H1 (cell line): ENCODE measurements at regions of chr19 and their contacts with region 1.

Region 1: GRCh38 chr19:1767464-1767933 is 14.2 kb downstream of the ONECUT3 start:
- DNase-seq: peak in 1 of 2 experiments; percentile 95
- H3K4me3 ChIP-seq: no peak overlapping the region
- H3K27ac ChIP-seq: no peak overlapping the region
- H3K4me1 ChIP-seq: peaks cover 0 to 20% (median 7%) of the 10 kb centered on the region in 4 experiments; a peak in 6 of 7 replicates
- H3K27me3 ChIP-seq: peaks cover 56 to 74% (median 68%) of the 10 kb centered on the region in 4 experiments
- CTCF ChIP-seq: peak; percentile 87 to 96 (median 89)
- EP300 ChIP-seq: no peak
- POLR2A ChIP-seq: no peak
- RAD21 ChIP-seq: peak; percentile 75

Region 2: DNA sequence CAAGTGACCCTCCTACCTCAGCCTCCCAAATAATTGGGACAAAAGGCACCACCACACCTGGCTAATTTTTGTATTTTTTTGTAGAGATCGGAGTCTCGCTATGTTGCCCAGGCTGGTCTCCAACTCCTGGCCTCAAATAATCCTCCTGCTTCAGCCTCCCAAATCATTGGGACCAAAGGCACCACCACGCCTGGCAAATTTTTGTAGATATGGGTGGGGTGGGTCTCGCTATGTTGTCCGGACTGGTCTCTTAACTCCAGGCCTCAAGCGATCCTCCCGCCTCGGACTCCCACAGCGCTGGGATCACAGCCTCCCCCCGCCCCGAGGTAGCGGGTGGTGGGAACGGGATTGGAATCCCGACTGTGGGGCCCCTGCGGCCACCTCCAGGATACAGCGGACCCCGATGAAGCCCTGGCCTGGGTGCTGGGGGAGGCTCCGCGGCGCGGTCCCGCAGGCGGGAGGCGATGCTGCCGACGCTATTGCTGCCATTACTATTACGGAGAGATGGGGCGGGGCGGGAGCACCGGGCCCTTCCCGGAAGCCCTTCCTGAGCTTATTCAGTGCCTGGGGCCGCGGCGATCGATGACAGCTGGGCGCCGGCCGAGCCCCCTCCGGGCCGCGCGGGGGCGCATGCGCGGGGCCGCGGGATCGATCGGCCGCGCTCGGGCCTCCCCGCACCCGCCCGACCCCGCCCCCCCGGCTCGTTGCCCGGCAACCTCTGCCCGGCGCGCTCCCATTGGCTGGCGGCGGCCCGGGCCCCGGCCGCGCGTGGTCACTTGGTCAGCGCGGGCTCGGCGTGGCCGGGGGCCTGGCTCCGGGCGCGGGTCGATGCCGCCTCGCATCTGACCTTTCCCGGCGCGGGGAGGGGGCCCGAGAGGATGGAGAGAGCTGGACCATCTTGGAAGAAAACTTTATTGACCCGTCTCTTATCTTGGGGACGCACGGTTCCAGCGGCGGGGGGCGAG is 42.1 kb before region 1 on chr19:
- CTCF ChIA-PET with region 1: interaction called, 10 read pairs
- POLR2A ChIA-PET with region 1: interaction called, 3 read pairs
- DNase-seq: peak in 1 of 2 experiments; percentile 86
- H3K4me3 ChIP-seq: peak overlapping the region; percentile 39 to 79 (median 53)
- H3K27ac ChIP-seq: no peak overlapping the region
- H3K4me1 ChIP-seq: peaks cover 2 to 6% (median 4%) of the 10 kb centered on the region in 4 experiments; a peak in 6 of 7 replicates
- H3K27me3 ChIP-seq: peaks cover 3 to 22% (median 18%) of the 10 kb centered on the region in 4 experiments; a peak in 5 of 7 replicates
- CTCF ChIP-seq: 0 out of 4 replicates have a peak, but pooled peaks of 1 of the 3 experiments have one; percentile 4
- EP300 ChIP-seq: no peak
- POLR2A ChIP-seq: no peak
- RAD21 ChIP-seq: 0 out of 4 replicates have a peak, but pooled peaks of 1 of the 2 experiments have one; percentile 0

Region 3: GRCh38 chr19:1754616-1755466 is 12.7 kb before region 1 on chr19:
- CTCF ChIA-PET with region 1: interaction called, 11 read pairs
- POLR2A ChIA-PET with region 1: no interaction called
- DNase-seq: peak in 1 of 2 experiments; percentile 73
- H3K4me3 ChIP-seq: peak overlapping the region in 2 of 4 experiments; percentile 19 to 43; a peak in 3 of 8 replicates
- H3K27ac ChIP-seq: no peak overlapping the region
- H3K4me1 ChIP-seq: peaks cover 0 to 38% (median 14%) of the 10 kb centered on the region in 4 experiments; a peak in 6 of 7 replicates
- H3K27me3 ChIP-seq: peaks cover 98 to 100% (median 99%) of the 10 kb centered on the region in 4 experiments
- CTCF ChIP-seq: no peak
- EP300 ChIP-seq: no peak
- POLR2A ChIP-seq: no peak
- RAD21 ChIP-seq: no peak

Region 4: DNA sequence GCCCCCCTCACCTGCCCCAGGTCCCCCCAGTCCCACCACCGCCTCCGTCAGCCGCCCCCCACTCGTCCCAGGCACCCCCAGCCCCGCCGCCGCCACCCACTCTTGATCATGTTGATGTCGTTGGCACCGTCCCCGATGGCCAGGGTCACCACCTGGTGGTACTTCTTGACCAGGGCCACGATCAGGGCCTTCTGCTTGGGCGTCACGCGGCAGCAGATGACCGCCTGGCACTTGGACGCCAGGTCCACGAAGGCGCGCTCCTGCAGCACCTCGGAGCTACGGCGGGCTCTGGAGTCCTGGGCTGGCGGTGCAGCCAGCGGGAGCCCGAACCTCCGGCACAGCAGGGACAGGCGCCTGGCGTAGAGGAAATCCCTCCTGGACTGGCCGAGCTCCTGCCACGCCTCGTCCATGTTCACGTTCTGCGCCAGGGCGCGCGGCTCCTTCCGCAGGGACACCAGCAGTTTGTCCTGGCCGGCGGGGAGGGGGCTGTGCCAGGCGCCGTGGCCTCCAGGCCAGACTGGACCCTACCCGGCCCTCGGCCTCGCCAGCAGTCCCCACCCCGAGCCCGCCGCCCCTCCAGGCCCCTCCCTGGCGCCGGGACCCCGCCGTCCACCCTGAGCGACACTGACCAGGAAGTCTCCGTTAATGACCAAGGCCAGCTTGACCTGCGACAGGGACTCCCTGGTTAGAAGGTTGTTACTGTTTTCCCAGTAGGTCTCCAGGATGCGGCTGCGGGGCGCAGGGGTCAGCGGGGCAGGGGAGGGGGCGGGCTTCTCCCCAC is 22.0 kb after region 1 on chr19:
- CTCF ChIA-PET with region 1: interaction called, 97 read pairs
- POLR2A ChIA-PET with region 1: interaction called, 4 read pairs
- DNase-seq: no peak
- H3K4me3 ChIP-seq: peak overlapping the region; percentile 7 to 58 (median 32); a peak in 5 of 8 replicates
- H3K27ac ChIP-seq: no peak overlapping the region
- H3K4me1 ChIP-seq: peaks cover 0 to 8% (median 4%) of the 10 kb centered on the region in 4 experiments; a peak in 5 of 7 replicates
- H3K27me3 ChIP-seq: peaks cover 2 to 17% (median 13%) of the 10 kb centered on the region in 4 experiments; a peak in 6 of 7 replicates
- CTCF ChIP-seq: no peak
- EP300 ChIP-seq: no peak
- POLR2A ChIP-seq: no peak
- RAD21 ChIP-seq: no peak

Region 5: DNA sequence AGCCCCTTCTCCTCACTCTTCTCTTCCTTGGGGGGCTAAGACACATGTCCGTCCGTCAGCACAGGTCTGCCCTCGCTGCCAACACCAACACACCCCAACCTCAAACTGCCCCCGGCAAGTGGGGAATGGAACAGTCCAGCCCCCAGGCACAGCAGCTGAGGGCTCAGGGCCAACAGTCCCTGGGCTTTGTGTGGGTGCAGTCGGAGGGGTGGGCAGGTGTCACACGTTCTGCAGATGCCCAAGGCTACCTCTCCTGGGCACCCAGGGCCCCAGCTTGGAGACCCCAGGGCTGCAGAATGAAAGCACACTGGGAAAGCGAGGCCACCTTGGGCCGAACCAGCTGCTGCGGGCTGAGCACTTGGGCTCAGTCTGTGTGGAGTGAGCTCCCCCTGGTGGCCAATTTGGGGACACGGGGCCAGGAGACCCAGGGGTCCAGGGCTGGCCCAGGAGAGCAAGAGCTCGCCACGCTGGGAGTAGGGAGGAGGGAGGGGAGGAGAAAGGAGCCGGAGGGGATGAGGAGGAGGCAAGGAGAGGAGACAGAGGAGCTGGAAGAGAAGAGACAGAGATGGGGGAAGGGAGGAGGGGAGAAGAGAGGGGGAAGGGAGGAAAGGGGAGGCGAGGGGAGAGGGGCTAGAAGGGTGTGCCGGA is 58.5 kb after region 1 on chr19:
- CTCF ChIA-PET with region 1: interaction called, 13 read pairs
- POLR2A ChIA-PET with region 1: interaction called, 3 read pairs
- DNase-seq: peak; percentile 56 to 97
- H3K4me3 ChIP-seq: no peak overlapping the region
- H3K27ac ChIP-seq: 0 out of 2 replicates have a peak overlapping the region, but pooled peaks have one; percentile 34
- H3K4me1 ChIP-seq: peaks cover 0 to 14% (median 8%) of the 10 kb centered on the region in 4 experiments; a peak in 6 of 7 replicates
- H3K27me3 ChIP-seq: no peaks in the 10 kb centered on the region
- CTCF ChIP-seq: peak; percentile 91 to 95 (median 93)
- EP300 ChIP-seq: no peak
- POLR2A ChIP-seq: no peak
- RAD21 ChIP-seq: peak; percentile 84 to 90